ENCODE measurements at regions of chr20 and their contacts with region 1.

Region 1: DNA sequence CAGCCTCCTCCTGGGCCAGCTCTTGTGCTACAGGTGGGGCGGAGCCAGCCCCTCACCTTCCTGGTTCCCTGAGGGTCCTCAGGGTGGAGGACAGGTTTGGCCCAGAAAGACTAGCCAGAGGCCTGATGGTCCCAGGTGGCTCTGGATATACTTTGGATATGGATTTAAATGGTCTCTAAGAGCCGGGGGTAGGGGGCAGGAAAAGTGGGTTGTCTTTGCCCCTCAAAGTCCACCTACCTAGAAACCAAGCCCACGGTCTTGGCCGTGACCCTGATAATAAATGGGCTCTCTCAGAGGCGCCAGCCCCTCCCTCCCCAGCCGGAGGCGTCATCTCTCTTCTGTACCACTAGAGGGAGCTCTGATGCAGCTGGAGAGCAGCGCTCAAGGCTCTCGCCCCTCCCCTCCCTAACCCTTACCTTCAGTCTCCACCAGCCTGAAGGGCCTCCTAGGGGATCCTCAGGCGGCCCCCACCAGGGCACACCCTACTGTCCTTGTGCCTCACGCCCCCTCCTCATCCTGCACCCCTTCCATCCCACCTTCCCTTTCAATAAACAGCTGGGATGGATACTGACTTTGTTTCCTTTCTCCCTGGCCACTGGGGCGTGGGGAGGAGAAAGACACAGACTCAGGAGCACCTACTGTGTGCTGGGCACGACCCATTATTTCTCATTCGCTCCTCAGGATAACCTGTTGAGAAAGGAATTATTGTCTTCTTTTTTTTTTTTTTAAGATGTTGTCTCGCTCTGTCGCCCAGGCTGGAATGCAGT is 7.6 kb downstream of the NRSN2 start:
- DNase-seq: no peak
- H3K4me3 ChIP-seq: no peak overlapping the region
- H3K27ac ChIP-seq: no peak overlapping the region
- H3K4me1 ChIP-seq: peaks cover 0 to 13% (median 8%) of the 10 kb centered on the region in 4 donors
- H3K27me3 ChIP-seq: no peaks in the 10 kb centered on the region
- CTCF ChIP-seq: peak; percentile 87 to 97 (median 89)
- EP300 ChIP-seq: no peak
- POLR2A ChIP-seq: no peak

Region 2: DNA sequence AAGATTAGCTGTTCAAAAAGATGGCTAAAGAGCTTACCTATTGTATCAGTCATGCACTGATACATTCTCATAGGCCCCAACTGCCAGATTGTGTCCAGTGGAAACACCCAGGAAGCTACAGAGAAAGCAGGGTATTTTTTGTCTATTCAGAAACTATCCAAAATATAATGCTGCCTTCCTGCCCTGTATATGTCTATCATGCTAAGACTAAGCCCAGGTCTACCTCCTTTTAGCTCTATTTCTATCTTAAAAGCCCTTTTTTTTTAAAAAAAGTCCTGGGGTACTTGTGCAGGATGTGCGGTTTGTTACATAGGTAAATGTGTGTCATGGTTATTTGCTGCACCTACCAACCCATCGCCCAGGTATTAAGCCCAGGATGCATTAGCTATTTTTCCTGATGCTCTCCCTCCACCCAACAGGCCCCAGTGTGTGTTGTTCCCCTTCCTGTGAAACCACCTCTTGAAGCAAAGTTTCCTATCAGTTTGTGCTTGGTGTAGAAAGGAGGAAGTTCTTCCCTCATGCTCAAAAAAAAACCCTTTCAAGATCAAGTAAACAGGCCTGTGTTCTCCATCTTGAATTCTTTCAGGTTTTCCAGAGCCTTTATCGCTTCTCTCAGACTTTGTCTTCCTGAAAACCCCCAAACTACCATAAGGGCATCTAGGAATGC is 126.9 kb before region 1 on chr20:
- intact Hi-C with region 1: no loop called
- DNase-seq: no peak
- H3K4me3 ChIP-seq: no peak overlapping the region
- H3K27ac ChIP-seq: no peak overlapping the region
- H3K4me1 ChIP-seq: no peaks in the 10 kb centered on the region
- H3K27me3 ChIP-seq: peaks cover 0 to 12% (median 0%) of the 10 kb centered on the region in 4 donors
- CTCF ChIP-seq: no peak
- EP300 ChIP-seq: no peak
- POLR2A ChIP-seq: no peak

Region 3: DNA sequence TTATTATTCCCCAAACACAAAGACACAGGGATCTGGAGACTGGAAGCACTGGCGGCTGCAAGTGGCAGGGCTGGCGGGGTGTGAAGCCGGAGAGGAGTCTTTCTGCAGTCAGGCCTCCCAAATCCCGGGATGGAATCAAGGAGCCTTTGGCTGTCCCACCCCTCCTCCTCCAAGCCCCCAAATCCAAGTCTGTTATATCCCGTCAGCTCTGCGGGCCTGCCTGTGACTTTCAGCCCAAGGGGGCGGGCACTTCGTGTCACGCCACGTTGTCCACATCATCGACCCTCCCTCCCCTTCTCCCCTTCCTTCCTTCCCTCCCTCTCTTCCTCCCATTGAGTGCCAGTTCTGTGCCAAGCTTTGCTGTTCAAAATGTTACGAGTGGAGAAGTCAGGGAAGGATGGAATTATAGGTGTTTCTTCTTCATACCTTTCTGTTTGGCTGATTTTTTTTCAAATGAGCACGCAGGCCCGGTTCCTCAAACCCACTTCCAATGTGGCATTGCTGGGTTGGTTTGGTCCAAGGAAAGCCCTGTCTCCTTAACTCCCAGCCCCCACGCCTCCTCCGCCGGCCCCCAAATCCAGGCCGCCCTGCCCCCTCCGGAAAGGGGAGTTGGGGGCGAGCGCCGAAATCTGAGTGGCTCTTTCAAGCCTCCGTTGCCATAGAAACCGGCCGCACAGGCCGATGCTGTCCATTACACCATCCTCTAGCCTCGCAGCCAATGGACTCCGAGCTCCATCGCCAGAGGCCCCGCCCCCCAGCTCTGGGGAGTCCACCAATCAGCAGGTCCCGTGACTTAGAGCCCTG is 44.4 kb before region 1 on chr20:
- intact Hi-C with region 1: no loop called
- DNase-seq: peak; percentile 100
- H3K4me3 ChIP-seq: peak overlapping the region; percentile 49 to 68 (median 60)
- H3K27ac ChIP-seq: peak overlapping the region; percentile 69 to 87 (median 83)
- H3K4me1 ChIP-seq: peaks cover 14 to 25% (median 18%) of the 10 kb centered on the region in 4 donors
- H3K27me3 ChIP-seq: no peaks in the 10 kb centered on the region
- CTCF ChIP-seq: no peak
- EP300 ChIP-seq: no peak
- POLR2A ChIP-seq: no peak

Region 4: DNA sequence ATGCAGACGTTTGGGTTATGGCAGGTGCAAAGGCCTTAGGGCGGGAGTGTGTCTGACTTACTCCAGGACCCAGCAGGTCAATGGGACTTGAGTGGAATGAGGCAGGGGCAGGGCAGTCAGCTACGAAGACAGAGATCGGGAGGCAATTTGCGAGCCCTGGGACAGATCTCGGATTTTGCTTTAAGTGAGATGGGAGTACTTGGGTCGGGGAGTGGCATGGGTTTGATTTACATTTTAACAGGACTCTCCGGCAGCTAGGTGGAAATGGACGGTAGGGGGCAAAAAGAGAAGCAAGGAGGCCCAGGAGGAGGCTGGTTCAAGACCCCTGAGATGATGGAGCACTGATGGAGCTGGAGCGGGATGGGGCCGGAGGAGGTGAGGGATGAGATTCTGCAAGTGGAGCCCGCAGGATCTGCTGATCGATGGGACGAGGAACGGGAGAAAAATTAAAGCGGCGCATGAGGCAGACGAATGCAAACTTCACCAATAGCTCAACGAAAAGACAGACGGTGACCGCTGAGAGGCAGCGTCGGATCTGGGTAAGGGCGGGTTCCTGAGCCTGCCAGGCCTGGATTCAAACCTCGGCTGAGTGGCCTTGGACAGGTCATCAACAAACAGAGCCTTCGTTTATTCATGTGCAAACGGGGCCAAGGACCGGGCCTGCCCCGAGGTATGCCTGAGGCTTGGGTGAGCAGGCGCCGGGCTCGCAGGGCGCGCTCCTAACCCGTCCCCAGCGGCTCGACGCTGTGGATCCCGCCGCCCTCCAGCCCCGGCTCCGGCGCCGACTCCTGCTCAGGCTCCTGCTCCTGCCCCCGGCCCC is 52.9 kb after region 1 on chr20:
- intact Hi-C with region 1: loop called (anchors 5 kb)
- DNase-seq: no peak
- H3K4me3 ChIP-seq: peak overlapping the region; percentile 78 to 99 (median 92)
- H3K27ac ChIP-seq: peak overlapping the region; percentile 82 to 97 (median 95)
- H3K4me1 ChIP-seq: peaks cover 16 to 31% (median 29%) of the 10 kb centered on the region in 4 donors
- H3K27me3 ChIP-seq: no peaks in the 10 kb centered on the region
- CTCF ChIP-seq: peak in 2 of 3 experiments; percentile 5 to 6
- EP300 ChIP-seq: no peak
- POLR2A ChIP-seq: no peak

Region 5: GRCh38 chr20:478949-479429 is 124.5 kb after region 1 on chr20:
- intact Hi-C with region 1: loop called (anchors 2 kb)
- DNase-seq: no peak
- H3K4me3 ChIP-seq: no peak overlapping the region
- H3K27ac ChIP-seq: no peak overlapping the region
- H3K4me1 ChIP-seq: peaks cover 0 to 10% (median 5%) of the 10 kb centered on the region in 4 donors
- H3K27me3 ChIP-seq: no peaks in the 10 kb centered on the region
- CTCF ChIP-seq: peak; percentile 60 to 64 (median 60)
- EP300 ChIP-seq: no peak
- POLR2A ChIP-seq: no peak

Region 6: DNA sequence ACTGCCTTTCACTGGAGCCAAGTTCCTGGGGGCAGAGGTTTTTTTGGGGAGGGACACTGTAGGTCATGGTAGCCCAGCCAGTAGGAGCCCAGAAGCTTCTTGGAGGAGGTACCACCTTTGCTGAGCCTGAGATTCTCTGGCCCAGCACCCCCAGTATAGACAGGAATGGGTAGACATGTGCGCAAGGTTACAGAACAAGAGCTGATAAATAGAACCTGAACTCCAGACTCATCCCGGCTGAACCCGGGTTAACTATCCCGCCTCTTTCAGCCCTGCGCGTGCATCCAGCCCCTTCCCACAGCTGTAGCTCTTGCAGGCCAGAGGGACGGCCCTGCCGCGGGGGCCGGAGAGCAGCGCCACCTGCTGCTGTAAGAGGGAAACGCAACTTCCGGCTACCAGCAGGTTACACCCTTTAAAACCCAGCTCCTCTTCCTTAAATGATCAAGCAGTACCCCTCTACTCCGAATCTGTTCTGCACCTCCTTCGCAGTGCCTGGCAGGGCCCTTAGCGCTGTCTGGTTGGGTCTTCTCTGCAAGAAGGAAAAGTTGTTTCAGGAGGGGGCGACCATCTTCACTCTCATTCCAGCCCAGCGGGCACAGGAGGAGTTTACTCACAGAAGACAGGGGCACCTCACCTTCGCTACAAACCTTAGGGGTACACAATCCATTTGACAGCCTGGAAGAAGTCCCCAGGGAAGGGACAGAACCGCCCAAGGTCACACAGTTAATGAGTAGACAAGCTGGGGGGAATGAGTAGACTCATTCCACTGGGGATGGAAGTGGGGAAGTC is 291.0 kb after region 1 on chr20:
- intact Hi-C with region 1: loop called (anchors 5 kb)
- DNase-seq: no peak
- H3K4me3 ChIP-seq: no peak overlapping the region
- H3K27ac ChIP-seq: no peak overlapping the region
- H3K4me1 ChIP-seq: peaks cover 15 to 29% (median 25%) of the 10 kb centered on the region in 4 donors
- H3K27me3 ChIP-seq: peaks cover 0 to 24% (median 9%) of the 10 kb centered on the region in 4 donors
- CTCF ChIP-seq: peak; percentile 78 to 94 (median 84)
- EP300 ChIP-seq: no peak
- POLR2A ChIP-seq: no peak

Region 7: GRCh38 chr20:733861-734260 is 379.4 kb after region 1 on chr20:
- intact Hi-C with region 1: loop called (anchors 10 kb)
- DNase-seq: no peak
- H3K4me3 ChIP-seq: no peak overlapping the region
- H3K27ac ChIP-seq: no peak overlapping the region
- H3K4me1 ChIP-seq: no peaks in the 10 kb centered on the region
- H3K27me3 ChIP-seq: peaks cover 0 to 38% (median 4%) of the 10 kb centered on the region in 4 donors
- CTCF ChIP-seq: no peak
- EP300 ChIP-seq: no peak
- POLR2A ChIP-seq: no peak

Measured in esophagus muscularis mucosa (tissue), 4 donors.